HCT116 (cell line): ENCODE measurements at regions of chr2 and their contacts with region 1.

Region 1: GRCh38 chr2:95115418-95115817 is 6.2 kb downstream of the MRPS5 start:
- DNase-seq: peak; percentile 45
- ATAC-seq: peak; percentile 100
- H3K4me3 ChIP-seq: no peak overlapping the region
- H3K27ac ChIP-seq: no peak overlapping the region
- H3K4me1 ChIP-seq: peaks cover 0 to 15% of the 10 kb centered on the region in 2 experiments; a peak in 3 of 4 replicates
- H3K27me3 ChIP-seq: no peaks in the 10 kb centered on the region
- CTCF ChIP-seq: peak; percentile 75 to 87 (median 86)
- POLR2A ChIP-seq: no peak
- RAD21 ChIP-seq: peak; percentile 81

Region 2: GRCh38 chr2:94874277-94875008 is 241.0 kb before region 1 on chr2:
- CTCF ChIA-PET with region 1: interaction called, 5 read pairs
- POLR2A ChIA-PET with region 1: no interaction called
- RAD21 ChIA-PET with region 1: no interaction called
- intact Hi-C with region 1: loop called (anchors 2 kb)
- DNase-seq: peak; percentile 24
- ATAC-seq: peak; percentile 95
- H3K4me3 ChIP-seq: no peak overlapping the region
- H3K27ac ChIP-seq: no peak overlapping the region
- H3K4me1 ChIP-seq: no peaks in the 10 kb centered on the region
- H3K27me3 ChIP-seq: no peaks in the 10 kb centered on the region
- CTCF ChIP-seq: peak; percentile 99 to 100 (median 100)
- POLR2A ChIP-seq: no peak
- RAD21 ChIP-seq: peak; percentile 80

Region 3: GRCh38 chr2:94939349-94939748 is 176.1 kb before region 1 on chr2:
- CTCF ChIA-PET with region 1: no interaction called
- POLR2A ChIA-PET with region 1: no interaction called
- RAD21 ChIA-PET with region 1: no interaction called
- intact Hi-C with region 1: no loop called
- DNase-seq: no peak
- ATAC-seq: no peak
- H3K4me3 ChIP-seq: no peak overlapping the region
- H3K27ac ChIP-seq: no peak overlapping the region
- H3K4me1 ChIP-seq: no peaks in the 10 kb centered on the region
- H3K27me3 ChIP-seq: peaks cover 78% of the 10 kb centered on the region
- CTCF ChIP-seq: no peak
- POLR2A ChIP-seq: no peak
- RAD21 ChIP-seq: no peak

Region 4: DNA sequence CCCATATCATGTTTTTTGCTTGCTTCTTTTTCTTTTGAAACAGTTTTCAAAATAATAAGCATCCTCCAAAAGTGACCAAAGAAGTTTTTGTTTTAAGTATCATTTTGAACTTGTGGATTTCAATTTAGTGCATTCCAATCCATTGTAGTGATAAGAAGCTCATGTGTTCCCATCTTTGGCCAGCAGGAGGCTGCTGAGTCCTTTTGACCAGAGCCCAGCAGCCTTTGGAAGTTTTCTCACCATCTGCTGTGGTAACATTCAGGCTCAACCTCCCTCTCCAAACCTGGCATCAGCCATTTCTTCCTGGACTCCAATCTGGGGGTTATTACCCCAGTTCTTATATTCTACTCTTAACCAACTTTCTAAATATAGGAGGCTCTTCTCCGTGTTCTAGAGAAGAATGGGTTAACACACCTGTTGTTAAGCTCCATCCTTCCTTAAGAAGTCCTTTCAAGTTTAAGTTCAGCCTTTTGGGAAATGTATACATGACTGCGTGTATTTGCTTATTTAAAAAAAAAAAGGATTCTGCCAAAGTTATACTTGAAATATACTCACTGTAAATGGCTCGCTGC is 128.9 kb before region 1 on chr2:
- CTCF ChIA-PET with region 1: interaction called, 6 read pairs
- POLR2A ChIA-PET with region 1: no interaction called
- RAD21 ChIA-PET with region 1: interaction called in 1 of 2 experiments, 7 read pairs
- intact Hi-C with region 1: loop called (anchors 2 kb)
- DNase-seq: peak; percentile 54
- ATAC-seq: peak; percentile 93
- H3K4me3 ChIP-seq: no peak overlapping the region
- H3K27ac ChIP-seq: no peak overlapping the region
- H3K4me1 ChIP-seq: no peaks in the 10 kb centered on the region
- H3K27me3 ChIP-seq: peaks cover 24% of the 10 kb centered on the region; the same call in 1 of the 2 replicates
- CTCF ChIP-seq: peak; percentile 61 to 79 (median 77); a peak in 5 of 6 replicates
- POLR2A ChIP-seq: no peak
- RAD21 ChIP-seq: peak; percentile 62

Region 5: DNA sequence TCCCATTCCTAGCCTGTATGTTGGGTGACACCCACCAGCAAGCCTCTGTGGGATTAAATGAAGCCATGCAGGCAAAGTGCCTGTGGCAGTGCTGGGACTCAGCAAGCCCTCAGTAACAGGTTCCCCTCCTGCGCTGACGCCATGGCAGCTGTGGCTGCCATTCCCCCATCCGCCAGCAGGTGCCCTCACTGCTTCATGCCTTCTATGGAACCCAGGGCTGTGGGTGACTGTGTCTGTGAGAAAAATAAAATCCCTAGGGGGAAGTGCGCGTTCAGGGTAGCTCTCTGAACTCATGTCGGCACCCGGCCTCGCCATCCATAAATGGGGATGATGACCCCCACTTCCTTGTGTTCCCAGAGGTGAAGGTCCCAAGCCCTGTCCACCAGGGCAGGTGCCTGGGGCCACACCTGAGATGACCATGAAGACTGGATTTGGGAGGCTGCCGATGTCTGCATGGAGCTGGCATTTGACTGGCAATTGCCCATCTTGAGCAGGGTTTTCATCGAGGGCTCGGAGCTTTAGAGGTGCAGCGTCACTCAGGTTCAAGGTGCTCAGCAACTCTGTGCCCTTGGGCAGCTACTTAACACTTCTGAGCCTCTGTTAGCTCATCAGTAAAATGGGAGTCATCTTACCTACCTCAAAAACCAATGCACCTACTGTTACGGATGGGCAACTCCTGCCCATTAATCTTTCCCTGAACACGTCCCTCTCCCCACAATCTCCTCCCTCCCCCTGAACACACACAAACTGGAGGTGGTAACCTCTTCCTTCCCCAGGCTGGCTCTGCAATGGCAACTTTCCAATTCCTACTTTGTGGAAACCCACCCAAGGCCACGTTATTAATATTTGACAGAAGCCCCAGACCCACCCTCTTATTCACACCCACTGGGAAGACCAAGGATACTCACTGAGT is 92.9 kb before region 1 on chr2:
- CTCF ChIA-PET with region 1: interaction called, 33 read pairs
- POLR2A ChIA-PET with region 1: interaction called, 3 read pairs
- RAD21 ChIA-PET with region 1: interaction called, 4 to 6 read pairs
- intact Hi-C with region 1: loop called (anchors 1 kb)
- DNase-seq: peak; percentile 34
- ATAC-seq: peak; percentile 91
- H3K4me3 ChIP-seq: no peak overlapping the region
- H3K27ac ChIP-seq: no peak overlapping the region
- H3K4me1 ChIP-seq: peaks cover 0 to 8% of the 10 kb centered on the region in 2 experiments; a peak in 1 of 4 replicates
- H3K27me3 ChIP-seq: no peaks in the 10 kb centered on the region
- CTCF ChIP-seq: peak; percentile 83 to 95 (median 94); a peak in 5 of 6 replicates
- POLR2A ChIP-seq: no peak
- RAD21 ChIP-seq: peak; percentile 84

Region 6: DNA sequence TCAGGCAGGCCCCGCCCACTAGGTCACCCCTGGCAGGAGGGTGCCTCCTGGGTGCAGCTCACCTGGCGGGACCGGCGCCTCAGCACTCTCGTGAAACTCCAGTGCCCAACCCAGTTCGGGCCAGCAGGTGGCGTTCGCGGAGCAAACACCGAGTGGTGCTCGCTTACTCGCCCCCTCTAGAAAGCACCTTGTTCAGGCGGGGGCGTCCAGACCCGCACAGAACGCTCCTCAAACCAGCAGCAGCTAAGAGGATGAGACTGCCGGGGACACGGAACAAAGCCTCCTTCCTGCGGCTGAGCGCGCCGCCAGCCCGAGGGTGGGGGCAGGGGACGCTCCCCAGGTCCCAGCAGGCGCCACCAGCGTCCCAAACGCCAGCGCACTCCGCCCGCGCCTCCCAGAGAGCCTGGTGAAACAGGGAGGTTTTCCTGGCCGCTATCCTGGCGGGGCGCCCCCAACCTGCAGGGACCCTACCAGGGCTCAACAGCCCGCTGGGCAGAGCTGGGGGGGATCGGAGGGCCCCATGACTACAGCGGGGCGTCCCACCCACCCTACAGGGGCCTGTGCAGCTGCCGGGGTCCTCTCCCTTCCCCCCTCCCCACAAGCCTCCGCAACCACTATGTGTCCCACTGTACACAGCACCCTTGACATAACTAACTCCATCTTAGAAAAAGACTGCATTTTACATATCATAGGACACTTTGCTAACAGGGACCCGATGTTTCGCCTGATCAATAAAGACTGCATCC is 38.5 kb before region 1 on chr2:
- CTCF ChIA-PET with region 1: interaction called, 19 read pairs
- POLR2A ChIA-PET with region 1: no interaction called
- RAD21 ChIA-PET with region 1: interaction called in 1 of 2 experiments, 5 read pairs
- intact Hi-C with region 1: loop called (anchors 1 kb)
- DNase-seq: peak; percentile 63
- ATAC-seq: peak; percentile 95
- H3K4me3 ChIP-seq: peak overlapping the region; percentile 50 to 63
- H3K27ac ChIP-seq: peak overlapping the region; percentile 25; the same call in 1 of the 2 replicates
- H3K4me1 ChIP-seq: peaks cover 8 to 19% of the 10 kb centered on the region in 2 experiments; a peak in 3 of 4 replicates
- H3K27me3 ChIP-seq: 0 out of 2 replicates have a peak, but pooled peaks cover 6% of the 10 kb centered on the region
- CTCF ChIP-seq: peak; percentile 82 to 85 (median 84)
- POLR2A ChIP-seq: no peak
- RAD21 ChIP-seq: peak; percentile 72

Region 7: GRCh38 chr2:96945012-96945804 is 1829.8 kb after region 1 on chr2:
- CTCF ChIA-PET with region 1: no interaction called
- POLR2A ChIA-PET with region 1: no interaction called
- RAD21 ChIA-PET with region 1: no interaction called
- intact Hi-C with region 1: no loop called
- DNase-seq: no peak
- ATAC-seq: no peak
- H3K4me3 ChIP-seq: no peak overlapping the region
- H3K27ac ChIP-seq: no peak overlapping the region
- H3K4me1 ChIP-seq: no peaks in the 10 kb centered on the region
- H3K27me3 ChIP-seq: 0 out of 2 replicates have a peak, but pooled peaks cover 2% of the 10 kb centered on the region
- CTCF ChIP-seq: no peak
- POLR2A ChIP-seq: no peak
- RAD21 ChIP-seq: no peak